PC-3 (cell line): ENCODE measurements at regions of chr9 and their contacts with region 1.

Region 1: DNA sequence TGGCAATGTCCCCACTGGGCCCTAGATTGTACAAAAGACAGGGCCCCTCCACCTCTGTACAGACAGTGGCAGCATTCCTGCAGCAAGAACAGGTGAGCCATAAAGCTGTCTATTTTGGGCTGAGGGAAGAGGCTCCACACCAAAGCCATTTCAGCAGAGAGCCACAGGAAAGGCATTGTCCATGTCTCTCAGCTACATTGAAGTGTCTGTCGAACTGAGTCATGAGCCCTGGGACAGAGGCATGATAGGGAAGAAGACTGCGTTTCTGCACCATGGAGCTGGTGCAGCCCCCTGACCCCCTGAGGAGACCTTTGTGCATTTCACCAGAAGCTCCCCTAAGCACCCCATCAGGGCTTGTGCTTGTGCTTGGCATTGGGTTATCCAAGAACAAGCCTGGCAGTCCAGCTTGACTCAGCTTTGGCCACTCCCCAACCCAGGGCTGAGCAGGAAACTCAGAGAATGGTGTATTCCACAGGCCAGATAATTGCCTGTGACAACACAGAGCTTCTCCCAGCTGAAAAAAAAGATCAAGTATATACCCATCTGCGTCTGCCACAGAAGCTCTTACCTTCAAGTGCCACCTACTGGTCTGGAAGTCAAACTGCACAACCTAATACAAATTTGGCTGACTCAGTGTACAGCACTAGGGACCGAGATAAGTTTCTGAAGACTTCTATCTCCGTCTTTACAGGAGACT is 5.9 kb upstream of the FRMD3 start:
- DNase-seq: peak; percentile 75
- ATAC-seq: peak; percentile 97
- H3K4me3 ChIP-seq: no peak overlapping the region
- H3K27ac ChIP-seq: no peak overlapping the region
- H3K4me1 ChIP-seq: no peaks in the 10 kb centered on the region
- H3K27me3 ChIP-seq: no peaks in the 10 kb centered on the region
- CTCF ChIP-seq: peak; percentile 74

Region 2: DNA sequence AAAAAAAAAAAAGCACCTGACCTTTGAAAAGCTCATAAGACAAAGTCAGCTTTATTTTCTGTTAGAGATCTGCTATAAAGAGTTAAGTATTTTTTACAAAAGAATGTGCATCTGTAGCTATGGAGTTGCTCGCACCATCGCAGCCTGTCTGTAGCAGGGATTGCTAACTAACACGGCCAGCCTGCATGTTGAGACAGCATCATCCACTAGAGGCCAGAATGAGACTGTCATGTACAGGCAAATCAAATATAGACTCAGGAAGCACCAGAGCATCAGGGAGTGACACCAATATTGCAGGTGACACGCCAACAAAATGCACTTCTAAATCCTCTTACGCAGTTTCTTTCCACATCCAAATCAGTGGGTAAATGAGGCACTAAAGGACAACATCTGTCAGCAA is 344.9 kb before region 1 on chr9:
- CTCF ChIA-PET with region 1: no interaction called
- POLR2A ChIA-PET with region 1: no interaction called
- intact Hi-C with region 1: loop called (anchors 2 kb)
- DNase-seq: peak; percentile 56
- ATAC-seq: peak; percentile 91
- H3K4me3 ChIP-seq: no peak overlapping the region
- H3K27ac ChIP-seq: no peak overlapping the region
- H3K4me1 ChIP-seq: no peaks in the 10 kb centered on the region
- H3K27me3 ChIP-seq: peaks cover 22% of the 10 kb centered on the region
- CTCF ChIP-seq: peak; percentile 66